Colonic mucosa (tissue), 4 donors: ENCODE measurements at regions of chr5 and their contacts with region 1.

Region 1: GRCh38 chr5:55601204-55601618 is 66.4 kb upstream of the PLPP1 start:
- DNase-seq: peak; percentile 89
- H3K4me3 ChIP-seq: no peak overlapping the region
- H3K27ac ChIP-seq: peak overlapping the region; percentile 72
- H3K4me1 ChIP-seq: peaks cover 15% of the 10 kb centered on the region
- H3K27me3 ChIP-seq: no peaks in the 10 kb centered on the region
- CTCF ChIP-seq: no peak

Region 2: DNA sequence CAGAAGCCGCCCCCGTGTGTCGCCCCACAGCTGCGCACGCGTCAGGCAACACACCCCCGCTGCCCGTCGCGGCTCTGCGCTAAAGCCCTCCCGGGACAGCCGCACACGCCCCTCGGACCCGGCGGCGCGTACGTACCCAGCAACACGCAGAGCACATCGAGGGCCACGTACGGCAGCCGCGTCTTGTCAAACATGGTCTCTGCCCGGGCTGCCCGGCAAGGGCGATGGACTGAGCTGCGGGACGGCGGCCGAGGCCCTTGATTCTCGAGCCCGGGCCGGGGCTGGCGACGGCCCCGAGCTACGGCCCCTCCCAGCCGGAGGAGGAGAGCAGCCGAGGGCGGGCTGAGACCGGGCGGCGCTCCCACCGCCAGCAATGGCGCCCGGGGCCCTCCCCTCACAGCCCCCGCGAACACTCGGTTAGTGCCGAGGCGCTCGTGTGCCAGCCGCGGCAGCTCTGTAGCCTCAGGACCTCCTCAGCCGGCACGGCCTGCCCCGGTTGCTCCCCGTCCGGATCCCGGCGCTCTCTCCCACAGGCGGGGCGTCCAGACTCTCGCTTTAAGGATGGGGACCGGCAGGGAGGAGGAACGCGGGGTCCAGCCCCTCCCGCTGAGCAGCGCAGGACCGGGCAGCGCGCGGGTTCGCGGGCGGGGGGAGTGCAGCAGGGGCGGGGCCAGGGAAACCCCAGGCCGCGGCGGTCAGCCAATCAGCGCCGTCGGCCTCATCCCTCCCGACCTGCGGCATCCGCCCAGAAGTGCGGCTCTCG is 66.6 kb before region 1 on chr5 and contains the start of gene PLPP1:
- intact Hi-C with region 1: loop called (anchors 5 kb)
- DNase-seq: peak; percentile 91
- H3K4me3 ChIP-seq: peak within 1 kb of the TSS; percentile 93
- H3K27ac ChIP-seq: peak within 1 kb of the TSS; percentile 98
- H3K4me1 ChIP-seq: no peaks in the 10 kb centered on the region
- H3K27me3 ChIP-seq: no peaks in the 10 kb centered on the region
- CTCF ChIP-seq: no peak
- total RNA-seq, gene PLPP1: 53.0 to 85.7 TPM